ENCODE measurements at regions of chr19 and their contacts with region 1.

Region 1: GRCh38 chr19:42363614-42364346 is 26.3 kb downstream of the CNFN start:
- DNase-seq: no peak
- ATAC-seq: no peak
- H3K4me3 ChIP-seq: no peak overlapping the region
- H3K27ac ChIP-seq: peak overlapping the region in 1 of 10 donors; percentile 52
- H3K4me1 ChIP-seq: peaks cover 0 to 35% (median 13%) of the 10 kb centered on the region in 9 donors
- H3K27me3 ChIP-seq: no peaks in the 10 kb centered on the region
- CTCF ChIP-seq: no peak

Region 2: DNA sequence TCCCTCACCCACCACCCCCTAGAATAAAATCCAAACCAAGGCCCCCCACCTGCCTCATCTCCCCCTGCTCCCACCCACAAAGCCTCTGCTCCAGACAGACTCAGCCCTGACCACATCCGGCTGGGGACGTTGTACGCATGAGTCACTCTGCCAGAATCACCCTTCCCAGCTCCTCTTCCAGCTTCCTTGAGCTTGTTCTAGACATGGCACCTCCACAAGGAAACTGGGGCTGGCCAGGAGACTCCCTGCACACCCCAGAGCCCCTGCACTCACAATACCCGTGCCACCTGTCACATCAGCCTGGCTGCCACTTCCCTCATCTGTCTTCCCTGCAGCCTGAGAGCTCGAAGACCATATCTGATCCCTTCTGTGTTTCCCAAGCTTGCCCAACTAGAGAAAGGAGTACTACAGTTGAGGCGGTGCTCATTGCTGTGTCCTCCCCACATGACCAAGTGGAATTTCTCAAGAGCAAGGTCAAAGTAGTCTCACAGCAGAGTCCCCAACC is 156.0 kb before region 1 on chr19:
- intact Hi-C with region 1: no loop called
- DNase-seq: no peak
- ATAC-seq: peak in 1 of 8 donors; percentile 29
- H3K4me3 ChIP-seq: no peak overlapping the region
- H3K27ac ChIP-seq: peak overlapping the region in 1 of 10 donors; percentile 79
- H3K4me1 ChIP-seq: peaks cover 0 to 58% (median 0%) of the 10 kb centered on the region in 9 donors
- H3K27me3 ChIP-seq: no peaks in the 10 kb centered on the region
- CTCF ChIP-seq: no peak

Region 3: DNA sequence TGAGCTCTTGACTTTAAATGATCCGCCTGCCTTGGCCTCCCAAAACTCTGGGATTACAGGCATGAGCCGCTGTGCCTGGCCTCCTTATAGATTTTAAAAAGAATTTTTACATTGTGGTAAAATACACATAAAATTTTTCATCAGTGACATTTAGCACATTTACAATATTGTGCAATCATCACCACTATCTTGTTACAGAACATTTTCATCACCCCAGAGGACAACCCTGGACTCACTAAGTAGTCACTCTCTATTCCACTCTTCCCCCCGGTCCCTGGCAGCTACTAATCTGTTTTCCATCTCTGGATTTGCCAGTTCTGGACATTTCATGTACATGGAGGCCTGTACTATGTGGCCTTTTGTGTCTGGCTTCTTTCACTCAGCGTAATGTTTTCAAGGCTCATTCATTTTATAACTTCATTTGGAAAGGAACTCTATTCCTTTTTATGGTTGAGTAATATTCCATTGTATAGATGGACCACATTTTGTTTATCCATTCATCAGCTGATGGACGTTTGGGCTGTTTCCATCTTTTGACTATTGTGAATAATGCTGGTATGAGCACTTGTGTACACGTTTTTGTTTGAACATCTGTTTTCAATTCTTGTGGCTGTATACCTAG is 18.5 kb before region 1 on chr19:
- intact Hi-C with region 1: loop called in 1 of 10 experiments (anchors 1 kb)
- DNase-seq: no peak
- ATAC-seq: no peak
- H3K4me3 ChIP-seq: no peak overlapping the region
- H3K27ac ChIP-seq: no peak overlapping the region
- H3K4me1 ChIP-seq: peaks cover 0 to 4% (median 0%) of the 10 kb centered on the region in 9 donors
- H3K27me3 ChIP-seq: no peaks in the 10 kb centered on the region
- CTCF ChIP-seq: no peak